ENCODE measurements at regions of chr20 and their contacts with region 1.

Region 1: DNA sequence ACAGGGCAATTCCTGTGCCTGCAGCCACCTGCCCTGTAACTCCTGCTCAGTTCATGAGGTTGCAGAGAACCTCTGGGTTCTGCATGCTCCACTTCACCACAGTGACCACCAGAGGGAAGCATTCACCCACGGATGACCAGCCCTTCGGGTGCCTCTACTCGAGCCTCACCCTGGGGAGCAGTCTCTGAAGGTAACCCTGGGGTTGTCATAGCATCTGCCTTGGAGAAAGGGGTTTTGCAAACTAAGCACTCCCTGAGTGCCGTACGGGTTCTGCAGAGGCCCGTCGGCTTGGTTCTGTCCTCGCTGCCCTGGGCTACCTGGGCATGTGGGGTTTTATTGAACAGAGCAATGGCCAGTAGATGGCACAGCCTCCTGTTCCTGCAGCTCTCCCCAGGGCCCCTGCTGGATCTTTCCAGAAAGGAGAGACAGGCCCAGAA is 10.2 kb upstream of the CST5 start:
- DNase-seq: peak; percentile 31 to 84 (median 58)
- ATAC-seq: peak; percentile 98
- H3K4me3 ChIP-seq: no peak overlapping the region
- H3K4me3 Mint-ChIP-seq: no peak overlapping the region
- H3K27ac ChIP-seq: no peak overlapping the region
- H3K27ac Mint-ChIP-seq: no peak overlapping the region
- H3K4me1 ChIP-seq: peaks cover 6% of the 10 kb centered on the region
- H3K4me1 Mint-ChIP-seq: peaks cover 4% of the 10 kb centered on the region
- H3K27me3 ChIP-seq: peaks cover 0 to 3% of the 10 kb centered on the region in 2 experiments
- H3K27me3 Mint-ChIP-seq: no peaks in the 10 kb centered on the region
- CTCF ChIP-seq: peak; percentile 76

Region 2: DNA sequence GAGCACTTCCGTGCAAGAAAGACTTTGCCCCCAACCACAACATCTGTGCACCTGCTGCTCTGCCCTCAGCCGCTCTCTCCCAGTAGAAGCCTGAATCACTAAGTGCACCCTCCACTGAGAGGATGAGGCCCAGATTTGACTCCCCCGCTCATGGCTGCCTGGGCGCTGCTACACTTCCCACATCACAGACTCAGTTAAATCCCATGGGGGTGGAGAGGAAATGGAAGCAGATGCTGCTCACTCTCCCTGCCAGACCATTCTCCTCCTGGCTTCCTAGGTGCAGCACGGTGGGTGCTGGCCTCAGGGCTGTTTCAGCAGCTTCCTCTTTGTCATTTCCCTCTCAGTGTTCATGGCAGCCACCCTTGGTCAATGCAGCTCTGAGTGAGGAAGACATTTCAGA is 15.0 kb before region 1 on chr20:
- CTCF ChIA-PET with region 1: no interaction called
- POLR2A ChIA-PET with region 1: interaction called, 4 read pairs
- intact Hi-C with region 1: loop called in 1 of 2 experiments (anchors 2 kb)
- DNase-seq: no peak
- ATAC-seq: peak; percentile 10
- H3K4me3 ChIP-seq: no peak overlapping the region
- H3K4me3 Mint-ChIP-seq: peak overlapping the region; percentile 55
- H3K27ac ChIP-seq: no peak overlapping the region
- H3K27ac Mint-ChIP-seq: peak overlapping the region; percentile 87
- H3K4me1 ChIP-seq: peaks cover 21% of the 10 kb centered on the region
- H3K4me1 Mint-ChIP-seq: peaks cover 36% of the 10 kb centered on the region
- H3K27me3 ChIP-seq: no peaks in the 10 kb centered on the region
- H3K27me3 Mint-ChIP-seq: no peaks in the 10 kb centered on the region
- CTCF ChIP-seq: no peak

Region 3: DNA sequence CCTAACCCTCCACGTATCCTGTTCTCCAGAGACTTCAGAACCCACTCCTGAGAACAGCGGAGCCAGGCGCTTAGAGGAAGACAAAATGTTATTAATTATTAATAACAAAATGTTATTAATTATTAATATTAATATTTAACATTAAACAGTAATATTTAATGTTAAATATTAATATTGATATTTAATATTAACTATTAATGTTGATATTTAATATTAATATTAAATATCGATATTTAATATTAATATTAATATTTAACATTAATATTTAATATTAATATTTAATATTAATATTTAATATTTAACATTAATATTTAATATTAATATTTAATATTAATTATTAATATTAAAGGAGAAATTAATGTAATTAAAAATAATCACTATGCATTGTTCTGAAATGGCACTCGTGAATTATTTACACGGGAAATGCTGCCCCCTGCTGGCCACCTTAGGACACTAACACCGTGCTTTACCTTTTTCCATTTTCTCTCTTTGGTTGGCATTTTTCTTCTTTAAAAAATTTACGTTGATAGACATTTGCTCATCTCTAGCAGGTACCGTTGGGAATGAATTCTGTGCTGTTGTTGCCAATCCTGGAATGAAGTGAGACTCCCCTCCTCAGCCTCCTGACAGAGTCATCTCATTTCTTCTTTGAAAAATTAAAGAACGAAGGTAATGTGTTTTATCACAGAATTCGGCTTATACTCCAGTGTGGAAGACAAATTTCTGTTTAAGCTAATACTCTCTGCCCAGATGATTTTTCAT is 106.3 kb after region 1 on chr20:
- CTCF ChIA-PET with region 1: no interaction called
- POLR2A ChIA-PET with region 1: no interaction called
- intact Hi-C with region 1: loop called (anchors 5 to 10 kb)
- DNase-seq: peak; percentile 34 to 78 (median 62)
- ATAC-seq: peak; percentile 68
- H3K4me3 ChIP-seq: no peak overlapping the region
- H3K4me3 Mint-ChIP-seq: no peak overlapping the region
- H3K27ac ChIP-seq: no peak overlapping the region
- H3K27ac Mint-ChIP-seq: no peak overlapping the region
- H3K4me1 ChIP-seq: no peaks in the 10 kb centered on the region
- H3K4me1 Mint-ChIP-seq: no peaks in the 10 kb centered on the region
- H3K27me3 ChIP-seq: peaks cover 0 to 3% of the 10 kb centered on the region in 2 experiments
- H3K27me3 Mint-ChIP-seq: no peaks in the 10 kb centered on the region
- CTCF ChIP-seq: peak; percentile 75

Region 4: DNA sequence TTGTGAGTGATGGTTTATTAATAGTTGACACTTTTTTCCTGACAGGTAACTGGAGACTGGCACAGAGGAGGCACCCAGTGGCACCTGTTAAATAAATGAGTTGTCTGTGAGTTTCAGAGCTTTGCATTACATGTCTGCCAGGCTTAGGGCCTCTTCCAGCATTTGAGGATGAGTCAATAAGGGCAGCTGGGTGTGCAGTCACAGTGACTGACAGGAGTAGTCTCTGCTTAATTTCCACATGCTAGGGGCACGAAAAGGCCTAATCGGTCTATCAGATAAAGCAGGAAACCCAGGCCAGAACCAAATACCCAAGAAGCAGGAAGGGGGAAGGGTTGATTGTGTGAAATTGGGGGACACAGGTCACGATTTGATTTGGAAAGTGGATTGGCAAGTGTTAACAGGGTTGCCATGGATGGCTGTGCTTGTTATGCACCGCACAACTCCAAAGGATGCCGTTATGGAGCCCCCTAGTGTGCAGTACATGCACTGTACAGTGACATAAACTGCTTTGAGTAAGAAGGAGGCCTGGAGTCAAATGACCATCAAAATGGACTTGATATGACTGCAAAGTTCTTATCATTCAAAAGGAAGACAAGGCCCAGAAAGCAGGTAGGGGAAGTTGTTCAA is 210.7 kb after region 1 on chr20:
- CTCF ChIA-PET with region 1: no interaction called
- POLR2A ChIA-PET with region 1: no interaction called
- intact Hi-C with region 1: loop called (anchors 1 to 5 kb)
- DNase-seq: peak; percentile 17 to 79 (median 54)
- ATAC-seq: peak; percentile 96
- H3K4me3 ChIP-seq: no peak overlapping the region
- H3K4me3 Mint-ChIP-seq: no peak overlapping the region
- H3K27ac ChIP-seq: no peak overlapping the region
- H3K27ac Mint-ChIP-seq: no peak overlapping the region
- H3K4me1 ChIP-seq: peaks cover 5% of the 10 kb centered on the region
- H3K4me1 Mint-ChIP-seq: no peaks in the 10 kb centered on the region
- H3K27me3 ChIP-seq: no peaks in the 10 kb centered on the region
- H3K27me3 Mint-ChIP-seq: peaks cover 5% of the 10 kb centered on the region
- CTCF ChIP-seq: peak; percentile 80

Region 5: GRCh38 chr20:24160563-24161375 is 271.0 kb after region 1 on chr20:
- CTCF ChIA-PET with region 1: no interaction called
- POLR2A ChIA-PET with region 1: no interaction called
- intact Hi-C with region 1: loop called (anchors 5 to 10 kb)
- DNase-seq: peak in 3 of 14 experiments; percentile 16 to 34 (median 32)
- ATAC-seq: no peak
- H3K4me3 ChIP-seq: no peak overlapping the region
- H3K4me3 Mint-ChIP-seq: no peak overlapping the region
- H3K27ac ChIP-seq: no peak overlapping the region
- H3K27ac Mint-ChIP-seq: no peak overlapping the region
- H3K4me1 ChIP-seq: no peaks in the 10 kb centered on the region
- H3K4me1 Mint-ChIP-seq: no peaks in the 10 kb centered on the region
- H3K27me3 ChIP-seq: peaks cover 0 to 6% of the 10 kb centered on the region in 2 experiments
- H3K27me3 Mint-ChIP-seq: no peaks in the 10 kb centered on the region
- CTCF ChIP-seq: peak; percentile 49

Region 6: GRCh38 chr20:24917797-24918578 is 1028.2 kb after region 1 on chr20:
- CTCF ChIA-PET with region 1: no interaction called
- POLR2A ChIA-PET with region 1: no interaction called
- intact Hi-C with region 1: loop called in 1 of 2 experiments (anchors 10 kb)
- DNase-seq: peak in 11 of 14 experiments; percentile 13 to 78 (median 28)
- ATAC-seq: peak; percentile 34
- H3K4me3 ChIP-seq: peak overlapping the region; percentile 33
- H3K4me3 Mint-ChIP-seq: no peak overlapping the region
- H3K27ac ChIP-seq: no peak overlapping the region
- H3K27ac Mint-ChIP-seq: no peak overlapping the region
- H3K4me1 ChIP-seq: peaks cover 11% of the 10 kb centered on the region
- H3K4me1 Mint-ChIP-seq: no peaks in the 10 kb centered on the region
- H3K27me3 ChIP-seq: no peaks in the 10 kb centered on the region
- H3K27me3 Mint-ChIP-seq: peaks cover 8% of the 10 kb centered on the region
- CTCF ChIP-seq: peak; percentile 62